ENCODE measurements at regions of chr2 and their contacts with region 1.

Region 1: DNA sequence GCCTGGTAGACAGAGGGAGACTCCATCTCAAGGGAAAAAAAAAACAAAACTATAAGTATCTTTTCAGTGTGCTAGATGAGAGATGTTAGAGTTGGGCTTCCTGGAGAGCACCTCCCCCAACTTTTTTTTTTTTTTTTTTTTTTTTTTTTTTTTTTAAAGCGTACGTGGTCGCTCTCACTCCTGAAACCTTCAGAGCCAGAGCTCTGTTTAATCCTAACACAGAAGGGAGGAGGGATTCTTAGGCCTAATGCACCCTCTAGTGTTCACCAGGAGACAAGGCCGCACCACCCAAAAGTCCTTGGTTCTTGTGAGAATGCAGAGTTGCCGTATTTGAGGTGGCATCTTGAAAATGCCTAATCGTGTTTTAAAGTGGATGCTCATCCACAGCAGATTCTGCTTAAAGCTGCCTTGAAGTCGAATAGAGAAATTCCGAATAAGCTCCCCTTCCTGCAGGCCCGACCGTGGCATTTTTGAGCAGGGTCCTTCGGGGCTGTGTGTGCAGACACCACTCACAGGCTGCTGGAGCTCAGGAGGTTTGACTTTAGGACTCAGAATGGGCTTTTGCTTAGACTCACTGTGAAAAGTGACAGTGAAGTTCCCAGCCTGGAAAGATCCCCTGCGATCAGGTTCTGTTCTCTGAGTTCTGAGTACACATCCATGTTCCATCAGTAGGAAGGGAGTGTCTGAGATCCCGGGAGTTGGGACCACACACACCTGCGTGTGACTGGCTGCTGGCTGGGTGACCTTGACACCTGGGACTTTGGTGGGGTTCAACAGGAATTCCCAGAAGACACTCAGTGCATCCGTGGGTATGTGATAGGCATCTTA is 252.6 kb downstream of the AGAP1 start:
- DNase-seq: peak in 1 of 3 donors; percentile 65
- ATAC-seq: peak; percentile 92 to 98 (median 94)
- H3K4me3 ChIP-seq: no peak overlapping the region
- H3K27ac ChIP-seq: no peak overlapping the region
- H3K4me1 ChIP-seq: peaks cover 0 to 4% (median 0%) of the 10 kb centered on the region in 4 donors
- H3K27me3 ChIP-seq: no peaks in the 10 kb centered on the region
- CTCF ChIP-seq: peak; percentile 57 to 84 (median 78)
- POLR2A ChIP-seq: no peak

Region 2: GRCh38 chr2:235149240-235149659 is 597.2 kb before region 1 on chr2:
- intact Hi-C with region 1: loop called in 1 of 2 experiments (anchors 10 kb)
- DNase-seq: peak in 1 of 3 donors; percentile 3
- ATAC-seq: no peak
- H3K4me3 ChIP-seq: no peak overlapping the region
- H3K27ac ChIP-seq: no peak overlapping the region
- H3K4me1 ChIP-seq: no peaks in the 10 kb centered on the region
- H3K27me3 ChIP-seq: no peaks in the 10 kb centered on the region
- CTCF ChIP-seq: no peak
- POLR2A ChIP-seq: no peak

Region 3: GRCh38 chr2:235605312-235606003 is 141.0 kb before region 1 on chr2:
- intact Hi-C with region 1: loop called in 1 of 2 experiments (anchors 10 kb)
- DNase-seq: no peak
- ATAC-seq: peak in 3 of 4 donors; percentile 40 to 46 (median 44)
- H3K4me3 ChIP-seq: no peak overlapping the region
- H3K27ac ChIP-seq: no peak overlapping the region
- H3K4me1 ChIP-seq: no peaks in the 10 kb centered on the region
- H3K27me3 ChIP-seq: no peaks in the 10 kb centered on the region
- CTCF ChIP-seq: no peak
- POLR2A ChIP-seq: no peak

Region 4: GRCh38 chr2:235877275-235877802 is 130.9 kb after region 1 on chr2:
- intact Hi-C with region 1: no loop called
- DNase-seq: no peak
- ATAC-seq: no peak
- H3K4me3 ChIP-seq: no peak overlapping the region
- H3K27ac ChIP-seq: no peak overlapping the region
- H3K4me1 ChIP-seq: no peaks in the 10 kb centered on the region
- H3K27me3 ChIP-seq: no peaks in the 10 kb centered on the region
- CTCF ChIP-seq: no peak
- POLR2A ChIP-seq: no peak

Measured in right lobe of liver (tissue), 6 donors.